HCT116 (cell line): ENCODE measurements at regions of chr2 and their contacts with region 1.

Region 1: DNA sequence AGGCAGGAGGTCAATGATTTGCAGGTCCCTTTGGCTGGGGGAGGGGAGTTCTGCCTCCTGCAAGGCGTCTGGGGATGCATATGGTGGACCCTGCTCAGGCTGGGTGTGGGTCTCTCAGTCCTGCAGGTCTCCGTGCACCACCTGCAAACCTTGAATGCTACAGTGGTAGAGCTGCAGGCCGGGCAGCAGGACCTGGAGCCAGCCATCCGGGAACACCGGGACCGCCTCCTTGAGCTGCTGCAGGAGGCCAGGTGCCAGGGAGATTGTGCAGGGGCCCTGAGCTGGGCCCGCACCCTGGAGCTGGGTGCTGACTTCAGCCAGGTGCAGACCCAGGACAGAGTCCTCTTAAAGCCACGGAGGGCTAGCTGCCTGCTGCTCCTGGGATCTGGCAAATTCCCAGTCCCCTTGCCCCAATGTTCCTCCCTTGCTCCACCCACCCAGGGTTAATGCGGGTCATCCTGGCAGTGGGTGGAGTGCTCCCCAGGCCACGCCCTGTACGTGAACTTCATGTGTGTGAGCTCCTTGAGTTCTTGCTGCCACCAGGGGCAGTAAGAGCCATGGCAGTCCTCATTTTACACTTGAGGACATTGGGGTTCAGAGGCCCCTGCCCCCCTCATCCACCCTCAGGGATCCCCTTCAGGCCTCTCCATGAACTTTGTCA is 3.1 kb downstream of the PROM2 start:
- DNase-seq: peak; percentile 23
- ATAC-seq: peak; percentile 78
- H3K4me3 ChIP-seq: no peak overlapping the region
- H3K27ac ChIP-seq: peak overlapping the region; percentile 37; the same call in 1 of the 2 replicates
- H3K4me1 ChIP-seq: peaks cover 33 to 61% of the 10 kb centered on the region in 2 experiments
- H3K27me3 ChIP-seq: no peaks in the 10 kb centered on the region
- CTCF ChIP-seq: peak in 2 of 3 experiments; percentile 51 to 54; a peak in 3 of 6 replicates
- POLR2A ChIP-seq: no peak
- RAD21 ChIP-seq: no peak

Region 2: DNA sequence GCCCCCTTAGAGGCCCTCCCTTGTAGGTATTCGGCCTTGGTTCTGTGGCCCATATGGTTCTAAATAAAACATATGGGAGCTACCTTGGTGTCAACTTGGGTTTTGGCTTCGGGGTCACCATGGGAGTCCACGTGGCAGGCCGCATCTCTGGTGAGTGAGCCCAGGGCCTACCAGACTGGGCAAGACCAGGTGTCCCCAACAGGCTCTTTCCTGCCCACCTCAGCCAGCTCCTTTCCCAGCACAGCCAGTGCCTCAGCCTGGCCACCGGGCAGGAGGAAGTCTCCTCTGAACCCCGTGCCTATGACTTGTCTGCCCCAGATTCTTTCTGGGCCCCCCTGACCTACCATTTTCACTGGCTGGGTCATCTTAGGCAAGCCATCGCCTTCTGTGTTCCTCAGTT is 674.9 kb before region 1 on chr2:
- CTCF ChIA-PET with region 1: no interaction called
- POLR2A ChIA-PET with region 1: no interaction called
- RAD21 ChIA-PET with region 1: no interaction called
- intact Hi-C with region 1: no loop called
- DNase-seq: no peak
- ATAC-seq: no peak
- H3K4me3 ChIP-seq: no peak overlapping the region
- H3K27ac ChIP-seq: no peak overlapping the region
- H3K4me1 ChIP-seq: peaks cover 0 to 5% of the 10 kb centered on the region in 2 experiments; a peak in 1 of 4 replicates
- H3K27me3 ChIP-seq: no peaks in the 10 kb centered on the region
- CTCF ChIP-seq: no peak
- POLR2A ChIP-seq: no peak
- RAD21 ChIP-seq: no peak

Region 3: GRCh38 chr2:95292623-95293260 is 15.4 kb after region 1 on chr2:
- CTCF ChIA-PET with region 1: interaction called, 10 read pairs
- POLR2A ChIA-PET with region 1: interaction called, 3 read pairs
- RAD21 ChIA-PET with region 1: no interaction called
- intact Hi-C with region 1: no loop called
- DNase-seq: no peak
- ATAC-seq: peak; percentile 42
- H3K4me3 ChIP-seq: no peak overlapping the region
- H3K27ac ChIP-seq: no peak overlapping the region
- H3K4me1 ChIP-seq: peaks cover 0 to 9% of the 10 kb centered on the region in 2 experiments; a peak in 2 of 4 replicates
- H3K27me3 ChIP-seq: no peaks in the 10 kb centered on the region
- CTCF ChIP-seq: no peak
- POLR2A ChIP-seq: no peak
- RAD21 ChIP-seq: no peak

Region 4: GRCh38 chr2:95314964-95315611 is 37.7 kb after region 1 on chr2:
- CTCF ChIA-PET with region 1: no interaction called
- POLR2A ChIA-PET with region 1: no interaction called
- RAD21 ChIA-PET with region 1: no interaction called
- intact Hi-C with region 1: no loop called
- DNase-seq: peak; percentile 32
- ATAC-seq: peak; percentile 92
- H3K4me3 ChIP-seq: no peak overlapping the region
- H3K27ac ChIP-seq: no peak overlapping the region
- H3K4me1 ChIP-seq: peaks cover 10 to 12% of the 10 kb centered on the region in 2 experiments; a peak in 2 of 4 replicates
- H3K27me3 ChIP-seq: no peaks in the 10 kb centered on the region
- CTCF ChIP-seq: peak; percentile 74 to 90 (median 80)
- POLR2A ChIP-seq: no peak
- RAD21 ChIP-seq: peak; percentile 90

Region 5: GRCh38 chr2:95333888-95334338 is 56.5 kb after region 1 on chr2:
- CTCF ChIA-PET with region 1: no interaction called
- POLR2A ChIA-PET with region 1: no interaction called
- RAD21 ChIA-PET with region 1: no interaction called
- intact Hi-C with region 1: no loop called
- DNase-seq: peak; percentile 80
- ATAC-seq: peak; percentile 80
- H3K4me3 ChIP-seq: peak overlapping the region in 1 of 2 experiments; percentile 1; a peak in 1 of 4 replicates
- H3K27ac ChIP-seq: peak overlapping the region; percentile 13; the same call in 1 of the 2 replicates
- H3K4me1 ChIP-seq: peaks cover 16 to 22% of the 10 kb centered on the region in 2 experiments; a peak in 3 of 4 replicates
- H3K27me3 ChIP-seq: no peaks in the 10 kb centered on the region
- CTCF ChIP-seq: no peak
- POLR2A ChIP-seq: no peak
- RAD21 ChIP-seq: no peak